ENCODE measurements at regions of chr10 and their contacts with region 1.

Region 1: GRCh38 chr10:121516093-121516865 is 82.0 kb downstream of the FGFR2 start:
- DNase-seq: no peak
- ATAC-seq: no peak
- H3K4me3 ChIP-seq: no peak overlapping the region
- H3K27ac ChIP-seq: no peak overlapping the region
- H3K4me1 ChIP-seq: peaks cover 0 to 1% of the 10 kb centered on the region in 2 donors
- H3K27me3 ChIP-seq: no peaks in the 10 kb centered on the region

Region 2: GRCh38 chr10:121501796-121502195 is 14.5 kb before region 1 on chr10:
- intact Hi-C with region 1: loop called in 1 of 2 experiments (anchors 1 kb)
- DNase-seq: no peak
- ATAC-seq: no peak
- H3K4me3 ChIP-seq: no peak overlapping the region
- H3K27ac ChIP-seq: no peak overlapping the region
- H3K4me1 ChIP-seq: no peaks in the 10 kb centered on the region
- H3K27me3 ChIP-seq: no peaks in the 10 kb centered on the region